ENCODE measurements at regions of chr2 and their contacts with region 1.

Region 1: DNA sequence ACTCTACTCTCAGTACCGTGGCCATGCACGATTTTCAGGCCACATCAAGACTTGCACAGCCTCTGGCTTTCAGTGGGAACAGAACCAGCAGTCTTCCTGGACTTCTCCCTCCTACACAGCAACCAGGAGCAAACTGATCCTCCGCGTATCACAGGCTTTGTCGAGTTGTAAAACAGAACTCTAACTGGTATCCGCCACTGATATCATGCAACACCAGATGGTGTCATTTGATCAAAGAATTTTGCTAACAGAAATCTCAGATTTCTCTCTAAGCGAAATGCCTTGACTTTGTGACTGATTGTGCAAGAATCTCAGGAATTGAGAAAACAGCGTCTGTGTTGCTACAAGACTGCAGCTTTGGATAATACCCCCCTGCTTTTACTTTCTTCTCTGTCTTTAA is 85.7 kb downstream of the COPS8 start:
- DNase-seq: peak; percentile 50 to 78
- H3K4me3 ChIP-seq: no peak overlapping the region
- H3K27ac ChIP-seq: no peak overlapping the region
- H3K4me1 ChIP-seq: peaks cover 13% of the 10 kb centered on the region
- H3K27me3 ChIP-seq: no peaks in the 10 kb centered on the region
- CTCF ChIP-seq: peak; percentile 65

Region 2: GRCh38 chr2:236503100-236503499 is 668.3 kb before region 1 on chr2:
- CTCF ChIA-PET with region 1: no interaction called
- POLR2A ChIA-PET with region 1: no interaction called
- intact Hi-C with region 1: no loop called
- DNase-seq: no peak
- H3K4me3 ChIP-seq: no peak overlapping the region
- H3K27ac ChIP-seq: no peak overlapping the region
- H3K4me1 ChIP-seq: no peaks in the 10 kb centered on the region
- H3K27me3 ChIP-seq: peaks cover 62% of the 10 kb centered on the region
- CTCF ChIP-seq: peak; percentile 30; the same call in 1 of the 2 replicates

Region 3: DNA sequence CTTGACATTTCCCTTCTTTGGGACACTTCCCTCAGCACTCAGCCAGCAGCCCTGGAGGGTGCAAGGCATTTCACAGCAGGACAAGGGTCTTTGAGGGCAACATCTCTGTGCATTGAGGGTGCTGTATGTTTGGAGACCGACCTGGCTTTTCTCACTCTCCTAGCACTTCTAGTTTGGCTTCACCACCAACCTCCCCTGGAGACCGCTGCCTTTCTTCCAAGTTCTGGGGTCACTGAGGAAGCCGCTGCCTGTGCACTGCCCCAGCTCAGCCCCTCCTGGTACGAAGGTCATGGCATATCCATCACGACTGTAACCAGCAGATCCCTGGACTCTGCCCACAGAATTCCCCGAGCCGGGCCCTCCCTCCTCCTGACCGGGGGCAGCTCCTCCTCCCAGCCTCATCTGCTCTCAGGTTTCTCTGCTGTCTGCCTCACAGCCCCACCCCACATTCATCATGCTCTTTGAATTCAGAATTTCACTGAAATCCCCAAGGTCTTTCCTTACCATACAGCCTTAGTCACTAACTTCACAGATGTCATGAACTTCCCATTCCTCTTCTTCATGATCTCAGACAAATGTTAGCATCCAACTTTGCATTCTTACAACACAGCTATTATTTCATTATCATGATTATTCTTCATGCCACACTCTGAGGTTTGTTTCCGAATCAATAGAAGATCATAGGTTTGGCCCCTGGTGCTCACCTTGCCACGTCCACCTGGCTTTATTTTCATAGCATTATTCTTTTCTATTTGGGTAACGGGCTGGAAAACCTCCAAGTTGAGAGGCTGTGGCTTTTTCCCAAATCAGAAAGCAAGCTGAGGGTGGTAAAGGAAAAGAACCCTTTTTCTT is 198.7 kb before region 1 on chr2:
- CTCF ChIA-PET with region 1: no interaction called
- POLR2A ChIA-PET with region 1: no interaction called
- intact Hi-C with region 1: no loop called
- DNase-seq: peak; percentile 71 to 80
- H3K4me3 ChIP-seq: no peak overlapping the region
- H3K27ac ChIP-seq: no peak overlapping the region
- H3K4me1 ChIP-seq: peaks cover 6% of the 10 kb centered on the region
- H3K27me3 ChIP-seq: peaks cover 70% of the 10 kb centered on the region
- CTCF ChIP-seq: no peak

Region 4: GRCh38 chr2:237201461-237202287 is 30.3 kb after region 1 on chr2:
- CTCF ChIA-PET with region 1: no interaction called
- POLR2A ChIA-PET with region 1: no interaction called
- intact Hi-C with region 1: loop called (anchors 1 kb)
- DNase-seq: peak; percentile 94 to 97
- H3K4me3 ChIP-seq: peak overlapping the region; percentile 36; the same call in 1 of the 2 replicates
- H3K27ac ChIP-seq: peak overlapping the region; percentile 86
- H3K4me1 ChIP-seq: peaks cover 64% of the 10 kb centered on the region
- H3K27me3 ChIP-seq: no peaks in the 10 kb centered on the region
- CTCF ChIP-seq: no peak

Region 5: GRCh38 chr2:237298151-237299118 is 127.0 kb after region 1 on chr2:
- CTCF ChIA-PET with region 1: no interaction called
- POLR2A ChIA-PET with region 1: interaction called, 4 read pairs
- intact Hi-C with region 1: loop called (anchors 1 kb)
- DNase-seq: peak; percentile 90
- H3K4me3 ChIP-seq: no peak overlapping the region
- H3K27ac ChIP-seq: no peak overlapping the region
- H3K4me1 ChIP-seq: peaks cover 24% of the 10 kb centered on the region
- H3K27me3 ChIP-seq: no peaks in the 10 kb centered on the region
- CTCF ChIP-seq: no peak

Region 6: GRCh38 chr2:237322564-237322963 is 151.2 kb after region 1 on chr2:
- CTCF ChIA-PET with region 1: no interaction called
- POLR2A ChIA-PET with region 1: no interaction called
- intact Hi-C with region 1: loop called (anchors 1 kb)
- DNase-seq: peak in 1 of 2 experiments; percentile 39
- H3K4me3 ChIP-seq: no peak overlapping the region
- H3K27ac ChIP-seq: no peak overlapping the region
- H3K4me1 ChIP-seq: no peaks in the 10 kb centered on the region
- H3K27me3 ChIP-seq: peaks cover 4% of the 10 kb centered on the region; the same call in 1 of the 2 replicates
- CTCF ChIP-seq: peak; percentile 79

Region 7: DNA sequence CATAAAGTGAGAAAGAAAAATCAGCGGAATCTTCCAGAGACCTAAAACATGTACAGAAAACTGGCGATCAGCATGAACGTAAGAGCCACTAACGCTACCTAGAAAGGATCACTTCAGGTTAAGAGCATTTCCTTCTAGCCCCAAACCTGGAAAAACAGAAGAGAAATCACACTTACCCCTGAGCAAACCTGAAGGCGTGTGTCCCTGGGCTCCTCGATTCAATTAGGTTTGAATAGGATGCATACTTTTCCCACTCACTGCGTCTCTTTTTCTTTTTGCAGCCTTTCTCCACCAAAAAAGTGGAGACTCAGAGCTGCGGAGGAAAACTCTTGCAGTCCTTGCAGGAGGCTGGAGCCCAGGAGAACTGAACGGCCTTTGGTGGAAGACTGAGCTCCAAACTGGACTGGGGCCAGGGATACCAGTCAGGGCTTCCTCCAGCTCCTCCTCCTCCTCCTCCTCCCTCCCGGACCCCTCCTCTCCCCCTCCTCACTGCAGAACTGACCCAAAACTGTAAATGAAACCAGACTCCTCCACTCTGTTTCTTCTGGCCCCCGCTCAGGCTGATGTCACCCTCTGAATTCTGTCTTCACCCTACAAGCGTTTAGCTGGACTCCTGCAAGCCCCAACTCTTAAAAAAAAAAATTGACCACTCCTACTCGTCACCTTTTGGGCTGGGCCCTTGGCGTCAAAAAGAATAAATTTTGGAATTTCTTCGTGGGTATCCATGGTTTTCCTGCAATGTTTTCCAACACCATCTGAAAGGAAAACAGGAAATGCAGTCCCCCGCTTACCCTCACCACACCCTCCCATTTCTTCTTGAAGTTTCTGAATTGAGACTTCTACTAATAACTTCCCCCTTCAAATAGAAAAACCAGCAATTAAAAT is 242.6 kb after region 1 on chr2 and contains the start of gene COL6A3:
- CTCF ChIA-PET with region 1: interaction called, 6 read pairs
- POLR2A ChIA-PET with region 1: no interaction called
- intact Hi-C with region 1: loop called (anchors 1 kb)
- DNase-seq: no peak
- H3K4me3 ChIP-seq: no peak within 1 kb of the TSS
- H3K27ac ChIP-seq: no peak within 1 kb of the TSS
- H3K4me1 ChIP-seq: no peaks in the 10 kb centered on the region
- H3K27me3 ChIP-seq: no peaks in the 10 kb centered on the region
- CTCF ChIP-seq: no peak
- total RNA-seq, gene COL6A3: 0.57 and 0.75 TPM in 2 replicates

Region 8: DNA sequence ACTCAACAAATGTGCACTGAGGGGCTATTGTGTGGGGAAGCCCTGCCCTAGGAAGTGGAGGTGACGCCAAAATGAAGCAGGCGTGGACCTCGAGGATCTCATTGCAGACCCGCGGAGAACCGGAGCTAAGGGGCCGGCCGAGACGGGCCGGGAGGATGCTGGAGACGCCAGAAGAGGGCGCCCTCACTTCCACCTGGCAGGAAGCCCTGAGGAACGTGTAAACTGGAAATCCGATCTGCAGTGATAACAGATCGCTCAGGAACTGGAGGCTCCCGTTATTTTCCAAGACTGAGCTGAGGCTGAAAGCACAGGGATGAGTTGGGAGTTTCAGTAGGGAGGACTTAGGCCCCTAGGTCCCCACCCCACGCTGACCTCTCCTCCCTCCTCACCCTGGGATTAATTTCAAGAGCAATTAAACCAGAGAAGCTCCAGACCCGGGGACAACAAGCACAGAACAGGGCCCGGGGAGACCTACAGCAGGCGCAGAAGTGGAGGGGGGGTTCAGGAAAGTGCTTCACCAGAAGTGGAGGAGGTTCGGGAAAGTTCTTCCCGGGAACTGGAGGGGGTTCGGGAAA is 250.2 kb after region 1 on chr2:
- CTCF ChIA-PET with region 1: interaction called, 6 read pairs
- POLR2A ChIA-PET with region 1: no interaction called
- intact Hi-C with region 1: loop called (anchors 1 kb)
- DNase-seq: peak; percentile 62 to 87
- H3K4me3 ChIP-seq: peak overlapping the region; percentile 32; the same call in 1 of the 2 replicates
- H3K27ac ChIP-seq: no peak overlapping the region
- H3K4me1 ChIP-seq: no peaks in the 10 kb centered on the region; the same call in 1 of the 2 replicates
- H3K27me3 ChIP-seq: no peaks in the 10 kb centered on the region
- CTCF ChIP-seq: peak; percentile 91

Region 9: DNA sequence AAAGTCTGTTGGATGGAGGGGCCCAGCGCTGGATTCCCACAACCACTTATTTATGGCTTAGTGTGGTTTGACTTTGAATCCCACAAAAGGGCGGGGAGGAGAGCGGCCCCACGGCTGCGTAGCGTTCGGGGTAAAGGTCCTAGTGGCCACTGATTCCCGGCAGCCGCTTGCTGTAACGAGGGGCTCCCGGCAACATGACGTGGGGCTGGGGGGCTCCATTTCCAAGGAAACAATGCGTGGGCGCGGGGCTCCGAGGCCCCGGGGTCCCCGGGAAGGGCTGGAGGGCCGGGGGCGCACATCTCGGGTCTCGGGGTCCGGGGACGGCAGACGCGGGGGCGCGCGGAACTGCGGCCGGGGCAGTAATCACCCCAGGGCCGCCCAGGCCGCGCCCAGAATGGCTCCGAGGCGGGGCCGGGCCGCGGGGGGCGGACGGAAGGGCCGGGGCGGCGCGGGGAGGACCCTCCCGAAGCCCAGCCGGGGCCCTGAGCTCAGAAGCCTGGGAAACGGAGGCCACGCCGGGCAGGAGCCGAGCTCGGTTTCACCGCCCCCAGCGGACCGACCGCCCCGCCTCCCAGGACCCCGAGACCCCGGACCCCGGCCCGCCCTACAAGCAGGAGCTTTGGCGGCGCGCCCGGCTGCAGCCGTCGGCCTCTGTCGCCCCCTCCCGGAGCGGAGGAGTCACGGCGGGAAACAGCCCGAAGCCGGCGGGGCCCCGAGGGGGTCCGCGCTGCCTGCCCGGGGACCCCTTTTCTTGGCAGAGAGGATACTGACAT is 303.7 kb after region 1 on chr2:
- CTCF ChIA-PET with region 1: interaction called, 12 read pairs
- POLR2A ChIA-PET with region 1: no interaction called
- intact Hi-C with region 1: loop called (anchors 1 kb)
- DNase-seq: peak; percentile 53 to 90
- H3K4me3 ChIP-seq: peak overlapping the region; percentile 63
- H3K27ac ChIP-seq: peak overlapping the region; percentile 79
- H3K4me1 ChIP-seq: peaks cover 25% of the 10 kb centered on the region
- H3K27me3 ChIP-seq: no peaks in the 10 kb centered on the region
- CTCF ChIP-seq: peak; percentile 97